Activated CD4-positive, alpha-beta T cell treated with anti-CD3 and anti-CD28 coated beads, Interleukin-2, amount 10 ng/mL, durations not matched to agents 24 days and 14 days (primary cell): ENCODE measurements at regions of chr14 and their contacts with region 1.

Region 1: DNA sequence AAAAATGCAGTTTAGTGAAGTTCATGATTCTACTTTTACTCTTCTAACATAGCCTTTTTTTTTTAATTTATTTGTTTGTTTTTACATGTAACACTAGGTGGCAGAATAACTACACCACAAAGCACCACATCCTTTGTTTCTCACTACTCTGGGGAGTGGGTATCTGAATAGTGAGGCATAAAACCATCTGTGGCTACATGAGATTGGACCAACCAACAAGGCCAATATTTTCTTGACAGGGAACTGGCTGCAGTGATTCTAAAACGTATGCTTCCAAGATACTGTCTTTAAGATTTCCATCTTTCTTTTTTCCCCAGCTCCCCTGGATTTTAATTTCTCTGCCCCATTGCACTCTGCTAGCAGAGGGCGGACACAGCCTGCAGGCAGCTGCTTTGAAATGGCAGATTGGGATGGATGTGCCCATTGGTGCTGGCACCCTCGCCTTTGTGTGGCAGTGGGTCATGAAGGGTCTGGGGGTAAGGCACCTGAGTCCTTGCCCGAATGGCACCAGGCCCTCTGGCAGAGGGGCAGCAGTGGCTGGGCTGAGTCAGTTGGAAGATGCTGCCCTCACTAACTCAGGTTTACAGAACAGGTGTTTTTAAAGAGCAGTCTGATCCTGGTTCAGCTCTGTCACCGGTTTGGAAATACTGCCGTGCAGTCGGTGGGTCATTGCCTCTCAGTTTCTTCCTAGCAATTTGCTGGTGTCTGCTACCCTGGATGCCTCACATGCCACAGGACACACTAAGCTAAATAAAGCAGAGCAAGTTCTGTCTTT is 429.1 kb downstream of the RAD51B start:
- DNase-seq: peak; percentile 73
- H3K4me3 Mint-ChIP-seq: no peak overlapping the region
- H3K27ac Mint-ChIP-seq: no peak overlapping the region
- H3K4me1 Mint-ChIP-seq: peaks cover 29% of the 10 kb centered on the region
- H3K27me3 Mint-ChIP-seq: no peaks in the 10 kb centered on the region

Region 2: GRCh38 chr14:67943947-67944346 is 304.7 kb before region 1 on chr14:
- intact Hi-C with region 1: loop called (anchors 5 kb)
- DNase-seq: peak; percentile 84
- H3K4me3 Mint-ChIP-seq: no peak overlapping the region
- H3K27ac Mint-ChIP-seq: no peak overlapping the region
- H3K4me1 Mint-ChIP-seq: no peaks in the 10 kb centered on the region
- H3K27me3 Mint-ChIP-seq: peaks cover 4% of the 10 kb centered on the region

Region 3: DNA sequence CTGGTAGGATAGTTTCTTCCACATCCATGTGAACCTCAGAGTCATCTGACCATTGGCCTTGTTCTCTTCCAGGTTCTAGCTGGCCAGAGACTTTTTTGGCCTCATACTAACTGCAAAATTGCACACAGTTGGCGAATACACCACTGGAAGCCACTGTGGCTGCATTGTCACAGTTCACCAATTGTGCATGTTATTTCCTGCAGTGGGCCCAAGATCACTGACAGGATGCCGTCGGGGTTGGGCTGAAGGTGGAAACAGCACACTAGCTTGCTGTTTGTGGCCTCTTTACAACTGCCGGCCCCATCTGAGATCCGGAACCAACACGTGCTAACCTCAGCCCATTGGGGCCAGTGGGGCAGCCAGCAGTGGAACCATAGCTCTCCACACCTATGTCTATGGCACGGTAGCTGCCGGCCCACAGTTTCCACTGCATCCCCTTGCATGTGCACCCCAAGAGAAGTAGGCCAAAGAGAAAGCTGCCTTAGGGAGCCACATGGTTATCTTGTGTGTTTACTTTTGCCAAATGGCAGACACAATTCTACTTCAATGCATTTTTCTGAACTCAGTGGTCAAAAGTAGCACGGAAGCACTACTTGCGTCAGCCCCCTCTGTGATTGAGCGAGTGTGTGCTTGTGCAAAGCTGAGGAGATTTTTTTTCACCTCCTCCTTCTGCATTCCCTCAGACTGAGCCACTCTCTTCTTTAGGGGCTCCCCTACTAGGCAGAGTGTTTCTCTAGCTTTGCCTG is 34.9 kb after region 1 on chr14:
- intact Hi-C with region 1: loop called (anchors 1 kb)
- DNase-seq: peak; percentile 88
- H3K4me3 Mint-ChIP-seq: peak overlapping the region; percentile 62
- H3K27ac Mint-ChIP-seq: peak overlapping the region; percentile 83
- H3K4me1 Mint-ChIP-seq: peaks cover 57% of the 10 kb centered on the region
- H3K27me3 Mint-ChIP-seq: no peaks in the 10 kb centered on the region

Region 4: GRCh38 chr14:68788996-68789820 is 540.5 kb after region 1 on chr14:
- intact Hi-C with region 1: loop called (anchors 1 kb)
- DNase-seq: peak; percentile 95
- H3K4me3 Mint-ChIP-seq: peak overlapping the region; percentile 93
- H3K27ac Mint-ChIP-seq: peak overlapping the region; percentile 100
- H3K4me1 Mint-ChIP-seq: peaks cover 68% of the 10 kb centered on the region
- H3K27me3 Mint-ChIP-seq: no peaks in the 10 kb centered on the region

Region 5: GRCh38 chr14:68843471-68844209 is 595.0 kb after region 1 on chr14:
- intact Hi-C with region 1: loop called (anchors 1 kb)
- DNase-seq: peak; percentile 92
- H3K4me3 Mint-ChIP-seq: peak overlapping the region; percentile 40
- H3K27ac Mint-ChIP-seq: peak overlapping the region; percentile 56
- H3K4me1 Mint-ChIP-seq: peaks cover 28% of the 10 kb centered on the region
- H3K27me3 Mint-ChIP-seq: peaks cover 8% of the 10 kb centered on the region